ENCODE measurements at regions of chr7 and their contacts with region 1.

Region 1: DNA sequence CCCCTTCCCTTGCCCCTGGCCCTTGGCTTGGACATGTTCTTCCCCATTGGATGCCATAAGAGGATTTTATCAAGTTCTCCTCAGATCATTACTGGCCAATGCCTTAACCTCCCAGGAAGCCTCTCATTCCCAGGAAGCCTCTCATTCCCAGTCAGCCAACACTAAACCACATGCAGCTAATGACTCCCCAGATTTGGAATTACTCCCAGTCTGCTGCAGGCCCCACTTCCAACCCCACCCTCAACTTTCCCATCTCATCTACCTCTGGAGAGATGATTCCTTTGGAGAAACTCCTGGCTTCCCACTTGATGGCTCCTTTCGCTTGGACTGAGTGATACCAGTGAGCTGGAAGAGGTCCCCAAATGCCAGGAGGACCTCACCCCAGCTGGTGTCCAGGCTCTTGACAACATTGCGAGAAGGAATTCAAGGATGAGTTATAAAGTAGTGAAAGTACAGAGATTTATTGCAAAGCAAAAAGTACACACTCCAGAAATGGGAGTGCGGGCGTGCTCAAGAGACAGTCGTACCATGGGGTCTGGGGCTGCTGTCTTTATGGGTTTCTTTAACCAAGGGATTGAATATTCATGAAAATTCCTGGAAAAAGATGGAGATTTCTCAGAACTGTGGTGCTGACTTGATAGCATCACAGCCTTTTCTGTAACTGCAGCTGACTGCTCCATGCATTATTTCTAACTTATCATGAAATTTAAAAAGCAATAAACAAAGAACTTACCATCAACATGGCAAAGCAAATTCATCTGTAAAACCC is 117.2 kb upstream of the ADCY1 start:
- DNase-seq: no peak
- H3K4me3 ChIP-seq: no peak overlapping the region
- H3K27ac ChIP-seq: no peak overlapping the region
- H3K27me3 ChIP-seq: peaks cover 0 to 4% (median 0%) of the 10 kb centered on the region in 45 donors
- CTCF ChIP-seq: no peak

Region 2: GRCh38 chr7:45391618-45392451 is 65.1 kb before region 1 on chr7:
- intact Hi-C with region 1: loop called in 1 of 2 experiments (anchors 10 kb)
- DNase-seq: no peak
- H3K4me3 ChIP-seq: no peak overlapping the region
- H3K27ac ChIP-seq: no peak overlapping the region
- H3K27me3 ChIP-seq: no peaks in the 10 kb centered on the region
- CTCF ChIP-seq: no peak

Measured in dorsolateral prefrontal cortex (tissue), 120 donors.